ENCODE measurements at regions of chrX and their contacts with region 1.

Region 1: GRCh38 chrX:21972721-21973120 is 32.2 kb downstream of the SMS start:
- DNase-seq: peak; percentile 83
- ATAC-seq: peak; percentile 72
- H3K4me3 ChIP-seq: no peak overlapping the region
- H3K27ac ChIP-seq: peak overlapping the region; percentile 17; the same call in 1 of the 2 replicates
- H3K4me1 ChIP-seq: peaks cover 5% of the 10 kb centered on the region; the same call in 1 of the 2 replicates
- H3K27me3 ChIP-seq: 0 out of 2 replicates have a peak, but pooled peaks cover 2% of the 10 kb centered on the region
- CTCF ChIP-seq: peak; percentile 13; the same call in 1 of the 2 replicates
- POLR2A ChIP-seq: no peak
- RAD21 ChIP-seq: no peak

Region 2: DNA sequence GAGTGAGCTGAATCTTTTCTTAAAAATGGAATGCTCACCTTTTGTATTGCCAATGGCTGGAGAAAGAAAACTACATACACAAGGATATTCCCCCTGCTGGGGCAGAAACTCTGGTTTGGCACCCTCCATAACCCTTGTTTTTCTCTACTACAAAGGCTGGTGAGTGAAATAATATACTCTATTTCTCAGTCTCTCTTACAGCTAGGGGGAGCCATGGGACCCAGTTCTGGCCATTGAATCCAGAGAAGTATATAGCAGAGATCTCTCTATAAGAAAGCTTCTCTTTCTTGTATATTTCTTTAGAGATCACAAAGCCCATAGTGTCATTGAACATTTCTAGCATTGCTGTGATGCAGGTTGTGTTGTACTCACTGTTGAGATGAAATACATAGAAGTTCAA is 264.6 kb before region 1 on chrX:
- CTCF ChIA-PET with region 1: no interaction called
- POLR2A ChIA-PET with region 1: no interaction called
- dilution Hi-C with region 1: no loop called
- in situ Hi-C with region 1: no loop called
- intact Hi-C with region 1: loop called (anchors 1 kb)
- DNase-seq: no peak
- ATAC-seq: no peak
- H3K4me3 ChIP-seq: no peak overlapping the region
- H3K27ac ChIP-seq: no peak overlapping the region
- H3K4me1 ChIP-seq: no peaks in the 10 kb centered on the region
- H3K27me3 ChIP-seq: no peaks in the 10 kb centered on the region
- CTCF ChIP-seq: peak; percentile 27; the same call in 1 of the 2 replicates
- POLR2A ChIP-seq: no peak
- RAD21 ChIP-seq: 0 out of 2 replicates have a peak, but pooled peaks have one; percentile 17

Region 3: DNA sequence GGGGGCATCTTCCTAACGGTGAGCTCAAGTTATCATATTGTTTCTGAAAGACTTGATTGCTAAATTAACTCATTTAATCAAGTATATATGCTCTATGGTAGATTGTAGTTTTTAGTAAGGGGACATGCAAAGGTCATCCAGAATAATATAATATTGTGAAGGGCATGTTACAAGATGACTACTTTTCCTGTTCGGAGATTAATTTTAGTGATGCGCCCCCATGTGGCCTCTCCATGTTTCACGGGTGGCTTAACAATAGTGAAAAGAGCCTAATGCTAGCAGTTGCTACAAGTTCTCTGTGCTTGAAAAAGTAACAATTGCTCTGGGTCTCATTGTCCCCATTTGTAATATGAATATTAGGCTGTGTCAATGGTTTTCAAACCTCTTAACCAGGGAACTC is 227.0 kb before region 1 on chrX:
- CTCF ChIA-PET with region 1: no interaction called
- POLR2A ChIA-PET with region 1: no interaction called
- dilution Hi-C with region 1: no loop called
- in situ Hi-C with region 1: no loop called
- intact Hi-C with region 1: loop called (anchors 10 kb)
- DNase-seq: peak; percentile 25
- ATAC-seq: peak; percentile 57
- H3K4me3 ChIP-seq: no peak overlapping the region
- H3K27ac ChIP-seq: no peak overlapping the region
- H3K4me1 ChIP-seq: no peaks in the 10 kb centered on the region
- H3K27me3 ChIP-seq: peaks cover 6% of the 10 kb centered on the region; the same call in 1 of the 2 replicates
- CTCF ChIP-seq: peak; percentile 49
- POLR2A ChIP-seq: no peak
- RAD21 ChIP-seq: peak; percentile 48

Region 4: DNA sequence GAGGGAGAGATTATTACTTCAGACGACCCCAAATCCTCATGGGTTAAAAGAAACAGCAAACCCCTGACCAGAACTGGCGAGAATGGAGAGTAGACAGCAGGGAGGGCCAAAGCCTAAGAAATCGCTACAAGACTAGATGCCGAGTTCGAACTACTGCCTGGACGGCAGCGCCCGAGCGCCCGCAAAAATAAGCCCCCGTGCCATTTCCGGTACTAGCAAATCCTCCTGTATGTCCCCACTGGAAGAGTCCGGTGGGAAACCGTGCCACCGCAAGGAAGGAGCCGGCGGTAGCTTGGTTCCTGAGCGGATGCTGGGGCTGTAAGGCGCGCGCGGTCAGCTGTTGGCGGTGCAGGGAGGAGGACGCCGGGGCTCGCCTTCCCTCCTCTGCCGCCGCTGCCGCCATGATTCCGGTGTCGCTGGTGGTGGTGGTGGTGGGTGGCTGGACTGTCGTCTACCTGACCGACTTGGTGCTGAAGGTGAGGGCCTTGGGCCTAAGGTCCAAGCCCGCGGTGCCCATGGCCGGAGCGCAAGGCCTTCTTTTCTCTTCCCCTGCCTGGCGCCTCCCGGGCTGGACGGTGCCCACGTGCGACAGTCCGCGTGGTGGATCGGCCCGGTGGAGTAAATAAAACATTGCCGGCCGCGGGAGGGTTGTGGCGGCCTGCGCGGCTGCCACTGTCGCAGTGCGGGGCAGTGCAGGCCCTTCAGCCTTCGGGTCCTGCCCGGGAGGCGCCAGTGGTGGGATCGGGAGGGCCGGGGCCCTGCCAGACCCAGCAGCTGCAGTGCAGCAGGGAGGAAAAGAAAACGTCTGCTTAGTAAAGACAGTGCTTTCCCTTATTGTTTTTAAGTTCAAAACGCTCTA is 133.2 kb before region 1 on chrX and contains the start of gene MBTPS2:
- CTCF ChIA-PET with region 1: no interaction called
- POLR2A ChIA-PET with region 1: no interaction called
- dilution Hi-C with region 1: no loop called
- in situ Hi-C with region 1: loop called (anchors 5 kb)
- intact Hi-C with region 1: loop called (anchors 1 kb)
- DNase-seq: peak; percentile 91
- ATAC-seq: peak; percentile 93
- H3K4me3 ChIP-seq: peak within 1 kb of the TSS; percentile 84
- H3K27ac ChIP-seq: peak within 1 kb of the TSS; percentile 96
- H3K4me1 ChIP-seq: no peaks in the 10 kb centered on the region; the same call in 1 of the 2 replicates
- H3K27me3 ChIP-seq: no peaks in the 10 kb centered on the region
- CTCF ChIP-seq: peak; percentile 50
- POLR2A ChIP-seq: peak; percentile 81
- RAD21 ChIP-seq: peak; percentile 65
- total RNA-seq, gene MBTPS2: 4.7 and 6.9 TPM in 2 replicates

Region 5: DNA sequence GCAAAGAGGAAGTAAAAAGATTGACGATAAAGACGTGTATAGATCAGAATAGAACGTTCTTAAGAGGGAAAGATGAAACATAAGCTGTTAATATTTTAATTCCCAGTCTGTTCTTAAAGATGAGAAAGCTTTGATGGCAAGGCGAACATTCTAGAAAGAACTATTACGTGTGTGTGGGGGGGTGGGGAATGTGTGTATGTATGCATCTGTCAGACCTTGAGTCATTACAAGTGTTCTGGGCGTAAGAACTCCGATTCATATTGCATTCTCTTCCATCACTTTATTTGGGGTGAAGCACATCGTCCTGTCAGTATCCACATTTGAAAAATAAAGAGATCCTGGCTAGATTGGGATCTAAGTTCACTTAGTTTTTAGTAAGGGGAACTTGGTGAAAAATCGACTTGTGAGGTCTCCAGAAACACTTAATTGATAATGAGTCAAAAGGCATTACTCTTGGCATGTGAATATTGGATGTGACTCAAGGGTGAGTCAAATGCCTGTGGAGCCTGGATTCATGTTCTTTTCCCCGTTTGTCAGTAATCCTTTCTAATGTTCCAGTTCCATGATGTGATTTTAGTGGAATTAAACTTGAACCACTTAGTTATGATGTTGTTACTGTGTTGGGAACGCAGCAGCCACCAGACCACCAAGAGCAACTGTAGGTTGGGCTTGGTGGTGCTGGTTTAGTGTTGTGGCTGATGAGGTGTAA is 29.1 kb before region 1 on chrX:
- CTCF ChIA-PET with region 1: no interaction called
- POLR2A ChIA-PET with region 1: no interaction called
- dilution Hi-C with region 1: no loop called
- in situ Hi-C with region 1: no loop called
- intact Hi-C with region 1: loop called (anchors 2 kb)
- DNase-seq: peak; percentile 92
- ATAC-seq: peak; percentile 3; the same call in 1 of the 2 replicates
- H3K4me3 ChIP-seq: peak overlapping the region; percentile 51; the same call in 1 of the 2 replicates
- H3K27ac ChIP-seq: peak overlapping the region; percentile 86
- H3K4me1 ChIP-seq: peaks cover 9% of the 10 kb centered on the region
- H3K27me3 ChIP-seq: no peaks in the 10 kb centered on the region
- CTCF ChIP-seq: no peak
- POLR2A ChIP-seq: no peak
- RAD21 ChIP-seq: no peak

Measured in IMR-90 (cell line).